ENCODE measurements at regions of chr16 and their contacts with region 1.

Region 1: DNA sequence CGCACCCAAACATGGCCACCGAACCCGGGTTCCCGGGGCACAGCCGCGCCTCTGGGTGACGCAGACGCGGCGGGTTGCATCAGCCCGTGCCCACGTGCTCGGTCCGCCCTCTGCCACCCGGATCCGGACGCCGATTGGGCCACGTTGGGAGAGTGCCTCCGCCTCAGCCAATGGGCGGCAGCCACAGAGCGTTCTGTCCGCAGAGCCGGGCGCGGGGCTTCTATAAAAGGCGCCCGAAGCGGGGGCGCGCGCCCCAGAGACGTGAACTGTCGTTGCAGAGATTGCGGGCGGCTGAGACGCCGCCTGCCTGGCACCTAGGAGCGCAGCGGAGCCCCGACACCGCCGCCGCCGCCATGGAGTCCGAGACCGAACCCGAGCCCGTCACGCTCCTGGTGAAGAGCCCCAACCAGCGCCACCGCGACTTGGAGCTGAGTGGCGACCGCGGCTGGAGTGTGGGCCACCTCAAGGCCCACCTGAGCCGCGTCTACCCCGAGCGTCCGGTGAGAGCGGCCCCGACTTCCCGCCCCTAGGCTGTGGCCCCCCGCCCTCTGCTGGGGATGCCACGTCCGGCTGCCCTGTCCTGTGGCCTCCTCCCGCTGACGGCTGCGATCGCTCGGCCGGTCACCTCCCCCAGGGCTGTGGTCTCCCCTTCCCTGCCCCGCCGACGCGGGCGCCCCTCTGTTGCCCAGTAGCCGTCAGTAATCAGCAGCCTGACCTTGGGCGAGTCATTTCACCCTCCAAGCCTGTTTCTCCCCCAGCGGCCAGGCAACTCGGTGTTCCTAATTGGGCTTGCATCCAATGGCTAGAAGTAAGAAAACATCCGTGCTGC is at the start of gene HERPUD1:
- DNase-seq: peak; percentile 97 to 99
- ATAC-seq: peak; percentile 94 to 97
- H3K4me3 ChIP-seq: peak within 1 kb of the TSS; percentile 99
- H3K27ac ChIP-seq: peak within 1 kb of the TSS; percentile 94 to 95
- H3K4me1 ChIP-seq: peaks cover 41% of the 10 kb centered on the region
- CTCF ChIP-seq: 0 out of 3 replicates have a peak, but pooled peaks have one; percentile 8
- EP300 ChIP-seq: peak in 1 of 2 experiments; percentile 20; a peak in 1 of 5 replicates
- POLR2A ChIP-seq: peak; percentile 83
- RAD21 ChIP-seq: no peak; a peak in 1 of 5 replicates
- polyA plus RNA-seq, gene HERPUD1: 140 and 182 TPM in 2 replicates

Region 2: DNA sequence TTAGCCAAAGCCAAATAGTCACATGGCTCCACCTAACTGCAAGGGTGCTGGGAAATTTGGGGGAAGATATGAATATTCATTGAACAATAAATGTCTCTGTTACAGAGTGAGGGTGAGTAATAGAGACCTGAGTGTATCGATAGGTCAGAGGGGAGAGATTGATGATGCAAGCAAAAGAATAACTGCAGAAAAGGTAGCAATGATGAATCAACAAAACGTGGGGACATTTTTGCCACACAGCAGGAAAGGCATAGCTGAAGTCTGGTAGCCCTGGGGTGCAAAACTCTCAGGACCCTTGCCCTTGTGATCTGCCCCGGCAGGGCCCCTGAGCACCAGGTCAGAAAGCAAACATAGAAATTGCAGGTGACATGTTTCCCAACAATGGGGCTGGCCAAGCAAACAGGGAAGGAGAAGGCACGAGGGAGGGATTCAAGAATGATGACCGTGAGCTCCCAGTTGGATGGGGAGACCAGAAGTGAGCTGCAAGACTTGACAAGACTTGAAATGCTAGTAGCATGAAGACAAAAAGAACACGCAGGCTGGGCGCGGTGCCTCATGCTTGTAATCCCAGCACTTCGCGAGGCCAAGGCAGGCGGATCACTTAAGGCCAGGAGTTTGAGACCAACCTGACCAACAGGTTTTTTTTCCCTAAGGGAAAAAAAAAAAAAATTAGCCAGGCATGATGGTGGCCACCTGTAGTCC is 12.9 kb before region 1 on chr16:
- CTCF ChIA-PET with region 1: interaction called, 4 read pairs
- POLR2A ChIA-PET with region 1: interaction called, 12 read pairs
- DNase-seq: no peak
- ATAC-seq: no peak
- H3K4me3 ChIP-seq: no peak overlapping the region
- H3K27ac ChIP-seq: no peak overlapping the region
- H3K4me1 ChIP-seq: no peaks in the 10 kb centered on the region
- CTCF ChIP-seq: no peak
- EP300 ChIP-seq: no peak
- POLR2A ChIP-seq: no peak
- RAD21 ChIP-seq: no peak

Region 3: DNA sequence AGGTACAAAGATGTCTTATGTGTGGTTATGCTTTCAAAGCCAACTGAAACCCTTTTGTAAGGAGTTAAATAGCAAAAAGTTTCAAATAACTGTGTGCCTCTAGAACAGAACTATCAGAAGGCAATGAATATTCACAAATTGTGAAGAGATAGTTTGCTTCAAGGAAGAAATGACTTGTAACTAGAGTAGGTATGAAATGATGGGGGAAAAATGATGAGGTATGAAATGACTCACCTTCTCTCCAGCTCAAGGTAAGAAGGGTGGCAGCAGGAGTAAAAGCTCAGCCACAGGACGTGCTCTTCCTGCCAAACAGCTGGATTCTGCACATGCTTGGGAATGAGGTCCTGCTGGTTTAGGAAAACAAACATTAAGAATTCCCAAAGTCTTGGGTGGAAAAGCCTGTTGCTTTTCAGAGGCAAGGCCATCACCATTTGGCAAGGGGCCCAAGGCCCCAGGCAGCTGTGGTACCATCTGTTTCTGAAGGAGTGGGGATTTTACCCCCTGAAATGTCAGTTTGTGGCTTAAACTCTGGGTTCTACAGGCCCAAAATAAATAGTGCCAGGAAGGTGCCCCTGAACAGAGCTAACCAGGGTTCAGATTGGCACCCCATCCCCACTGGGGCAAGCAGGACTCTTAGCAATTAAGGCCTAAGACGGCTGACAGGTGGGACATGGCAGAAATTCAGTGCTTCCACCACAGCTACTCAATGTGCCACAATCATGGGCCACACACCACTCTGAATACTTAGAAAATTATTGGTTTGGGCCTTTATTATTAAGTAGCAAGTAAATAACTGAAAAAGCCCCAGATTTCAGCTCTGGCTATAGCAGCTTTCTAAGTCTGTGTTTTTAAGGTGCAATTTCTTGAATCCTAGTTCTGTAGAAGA is 13.1 kb after region 1 on chr16:
- CTCF ChIA-PET with region 1: interaction called, 5 read pairs
- POLR2A ChIA-PET with region 1: interaction called, 26 read pairs
- DNase-seq: no peak
- ATAC-seq: no peak
- H3K4me3 ChIP-seq: no peak overlapping the region
- H3K27ac ChIP-seq: no peak overlapping the region
- H3K4me1 ChIP-seq: no peaks in the 10 kb centered on the region
- CTCF ChIP-seq: no peak
- EP300 ChIP-seq: no peak
- POLR2A ChIP-seq: no peak
- RAD21 ChIP-seq: no peak

Region 4: GRCh38 chr16:58767581-58767980 is 1835.5 kb after region 1 on chr16:
- CTCF ChIA-PET with region 1: no interaction called
- POLR2A ChIA-PET with region 1: no interaction called
- DNase-seq: no peak
- ATAC-seq: no peak
- H3K4me3 ChIP-seq: no peak overlapping the region
- H3K27ac ChIP-seq: no peak overlapping the region
- H3K4me1 ChIP-seq: no peaks in the 10 kb centered on the region
- CTCF ChIP-seq: no peak
- EP300 ChIP-seq: no peak
- POLR2A ChIP-seq: no peak
- RAD21 ChIP-seq: no peak

Measured in A549 (cell line).